ENCODE measurements at regions of chr7 and their contacts with region 1.

Region 1: GRCh38 chr7:27605689-27606269 is 56.9 kb downstream of the HIBADH start:
- DNase-seq: no peak
- ATAC-seq: no peak
- H3K4me3 Mint-ChIP-seq: no peak overlapping the region
- H3K27ac Mint-ChIP-seq: no peak overlapping the region
- H3K4me1 Mint-ChIP-seq: peaks cover 65% of the 10 kb centered on the region
- H3K27me3 Mint-ChIP-seq: no peaks in the 10 kb centered on the region
- CTCF ChIP-seq: no peak

Region 2: GRCh38 chr7:27434756-27435400 is 170.9 kb before region 1 on chr7:
- CTCF ChIA-PET with region 1: interaction called, 11 read pairs
- POLR2A ChIA-PET with region 1: no interaction called
- DNase-seq: no peak
- ATAC-seq: peak; percentile 52
- H3K4me3 Mint-ChIP-seq: no peak overlapping the region
- H3K27ac Mint-ChIP-seq: no peak overlapping the region
- H3K4me1 Mint-ChIP-seq: peaks cover 32% of the 10 kb centered on the region
- H3K27me3 Mint-ChIP-seq: no peaks in the 10 kb centered on the region
- CTCF ChIP-seq: no peak

Region 3: GRCh38 chr7:27586825-27587224 is 19.0 kb before region 1 on chr7:
- CTCF ChIA-PET with region 1: interaction called, 21 read pairs
- POLR2A ChIA-PET with region 1: no interaction called
- DNase-seq: peak; percentile 13
- ATAC-seq: no peak
- H3K4me3 Mint-ChIP-seq: no peak overlapping the region
- H3K27ac Mint-ChIP-seq: no peak overlapping the region
- H3K4me1 Mint-ChIP-seq: peaks cover 45% of the 10 kb centered on the region
- H3K27me3 Mint-ChIP-seq: no peaks in the 10 kb centered on the region
- CTCF ChIP-seq: no peak

Measured in WTC11 (cell line).